PC-3 (cell line): ENCODE measurements at regions of chr4 and their contacts with region 1.

Region 1: DNA sequence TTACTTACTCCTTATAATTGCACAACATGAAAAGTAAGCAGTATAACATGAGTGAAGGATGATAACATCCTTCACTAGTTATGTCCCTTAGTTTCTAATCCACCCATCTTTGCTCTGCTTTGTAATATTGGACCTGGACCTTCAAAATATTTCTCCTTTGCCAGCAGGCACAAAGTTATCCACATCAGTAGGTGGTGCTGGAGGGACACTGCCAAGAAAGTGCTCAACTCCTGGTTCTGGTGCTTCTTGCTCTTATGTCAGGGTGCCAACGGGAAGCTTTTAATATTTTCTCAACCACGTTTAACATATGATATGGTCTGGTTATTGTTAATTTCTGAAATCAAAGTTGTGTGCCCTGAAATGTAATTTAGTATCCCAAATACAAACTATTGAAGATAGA is 49.1 kb downstream of the TMEM165 start:
- DNase-seq: peak; percentile 67
- ATAC-seq: peak; percentile 23; the same call in 1 of the 2 replicates
- H3K4me3 ChIP-seq: no peak overlapping the region
- H3K27ac ChIP-seq: no peak overlapping the region
- H3K4me1 ChIP-seq: peaks cover 23% of the 10 kb centered on the region
- H3K27me3 ChIP-seq: no peaks in the 10 kb centered on the region
- CTCF ChIP-seq: peak; percentile 77

Region 2: DNA sequence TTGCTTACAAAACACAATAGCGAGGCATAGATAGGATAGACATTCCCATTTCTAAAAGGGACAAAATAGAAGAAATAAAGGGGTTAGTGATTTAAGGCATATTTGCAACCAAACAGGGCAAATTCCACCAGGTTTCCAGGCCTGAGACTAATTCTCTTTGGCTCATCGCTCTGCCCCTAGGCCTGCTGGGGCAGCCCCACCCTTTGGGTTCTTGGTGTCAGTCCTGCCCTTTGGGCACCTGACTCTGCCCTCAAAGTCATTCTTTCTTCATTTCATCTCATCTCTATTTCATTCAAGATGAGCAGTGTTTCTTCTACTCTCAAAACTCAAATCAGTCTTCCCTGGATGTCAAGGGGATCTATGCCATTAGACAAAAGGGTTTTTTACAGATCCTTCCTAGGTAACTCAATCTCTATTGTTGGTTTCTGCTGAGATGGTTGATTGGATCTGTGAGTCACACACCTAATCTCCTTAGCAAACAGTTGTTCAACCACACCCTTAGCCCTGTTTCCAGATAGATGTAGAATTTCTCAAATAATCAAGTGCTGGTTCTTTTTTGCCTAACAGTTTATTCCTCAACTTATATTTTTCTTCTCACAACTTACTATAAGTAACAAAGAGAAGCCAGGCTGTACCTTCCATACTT is 520.1 kb before region 1 on chr4:
- CTCF ChIA-PET with region 1: no interaction called
- POLR2A ChIA-PET with region 1: no interaction called
- intact Hi-C with region 1: no loop called
- DNase-seq: peak; percentile 87
- ATAC-seq: peak; percentile 79
- H3K4me3 ChIP-seq: no peak overlapping the region
- H3K27ac ChIP-seq: peak overlapping the region; percentile 64
- H3K4me1 ChIP-seq: peaks cover 16% of the 10 kb centered on the region
- H3K27me3 ChIP-seq: no peaks in the 10 kb centered on the region; the same call in 1 of the 2 replicates
- CTCF ChIP-seq: no peak

Region 3: DNA sequence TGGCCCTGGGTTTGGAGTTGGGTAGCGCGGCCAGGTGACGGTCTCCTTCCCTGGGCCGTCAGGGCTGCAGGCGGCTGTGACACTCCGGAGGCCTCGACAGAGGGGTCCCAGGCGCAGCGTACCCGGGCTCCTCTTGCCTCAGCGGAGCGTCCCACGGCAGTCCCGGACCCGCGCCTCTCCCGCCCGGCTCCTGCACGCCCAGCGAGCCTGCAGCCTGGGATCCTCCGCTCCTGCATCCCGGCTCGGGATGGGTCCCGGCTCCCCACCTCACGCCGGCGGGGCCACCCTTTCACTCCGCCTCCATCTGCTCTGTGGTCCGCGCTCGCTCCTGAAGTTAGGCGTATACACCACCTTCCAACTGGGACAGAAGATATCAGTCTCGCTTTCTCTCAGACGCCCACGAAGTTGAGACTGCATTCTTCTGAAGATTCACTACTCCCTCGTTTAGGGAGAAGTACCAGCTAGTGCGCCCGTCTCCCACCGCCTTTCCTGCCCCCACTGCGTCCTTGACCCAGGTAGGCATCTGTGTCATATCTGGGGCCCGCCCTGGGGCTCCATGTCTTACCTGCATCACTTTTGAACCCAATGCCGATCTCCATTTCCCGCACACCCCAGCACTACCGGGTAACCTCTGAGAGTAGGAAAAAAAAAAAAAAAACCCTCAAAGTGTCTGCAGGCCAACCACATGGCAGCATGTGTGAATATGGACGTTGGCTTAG is 287.1 kb before region 1 on chr4:
- CTCF ChIA-PET with region 1: no interaction called
- POLR2A ChIA-PET with region 1: no interaction called
- intact Hi-C with region 1: no loop called
- DNase-seq: no peak
- ATAC-seq: no peak
- H3K4me3 ChIP-seq: no peak overlapping the region
- H3K27ac ChIP-seq: no peak overlapping the region
- H3K4me1 ChIP-seq: no peaks in the 10 kb centered on the region
- H3K27me3 ChIP-seq: no peaks in the 10 kb centered on the region
- CTCF ChIP-seq: no peak

Region 4: GRCh38 chr4:55475394-55476243 is 30.8 kb after region 1 on chr4:
- CTCF ChIA-PET with region 1: interaction called, 4 read pairs
- POLR2A ChIA-PET with region 1: interaction called, 4 read pairs
- intact Hi-C with region 1: loop called (anchors 1 kb)
- DNase-seq: peak; percentile 73
- ATAC-seq: peak; percentile 75
- H3K4me3 ChIP-seq: no peak overlapping the region
- H3K27ac ChIP-seq: peak overlapping the region; percentile 33
- H3K4me1 ChIP-seq: peaks cover 35% of the 10 kb centered on the region
- H3K27me3 ChIP-seq: no peaks in the 10 kb centered on the region
- CTCF ChIP-seq: no peak

Region 5: GRCh38 chr4:55554453-55555030 is 109.7 kb after region 1 on chr4:
- CTCF ChIA-PET with region 1: interaction called, 17 read pairs
- POLR2A ChIA-PET with region 1: no interaction called
- intact Hi-C with region 1: loop called (anchors 1 kb)
- DNase-seq: peak; percentile 71
- ATAC-seq: 0 out of 2 replicates have a peak, but pooled peaks have one; percentile 4
- H3K4me3 ChIP-seq: no peak overlapping the region
- H3K27ac ChIP-seq: no peak overlapping the region
- H3K4me1 ChIP-seq: peaks cover 26% of the 10 kb centered on the region
- H3K27me3 ChIP-seq: no peaks in the 10 kb centered on the region
- CTCF ChIP-seq: peak; percentile 83

Region 6: GRCh38 chr4:55736605-55737183 is 291.9 kb after region 1 on chr4:
- CTCF ChIA-PET with region 1: interaction called, 3 read pairs
- POLR2A ChIA-PET with region 1: no interaction called
- intact Hi-C with region 1: loop called (anchors 1 kb)
- DNase-seq: peak; percentile 64
- ATAC-seq: no peak
- H3K4me3 ChIP-seq: no peak overlapping the region
- H3K27ac ChIP-seq: no peak overlapping the region
- H3K4me1 ChIP-seq: peaks cover 15% of the 10 kb centered on the region
- H3K27me3 ChIP-seq: no peaks in the 10 kb centered on the region
- CTCF ChIP-seq: peak; percentile 77